PC-3 (cell line): ENCODE measurements at regions of chr14 and their contacts with region 1.

Region 1: GRCh38 chr14:64914237-64914971 is at the start of gene CHURC1:
- DNase-seq: peak; percentile 100
- ATAC-seq: peak; percentile 99
- H3K4me3 ChIP-seq: peak within 1 kb of the TSS; percentile 85
- H3K27ac ChIP-seq: peak within 1 kb of the TSS; percentile 48
- H3K4me1 ChIP-seq: peaks cover 15% of the 10 kb centered on the region
- H3K27me3 ChIP-seq: no peaks in the 10 kb centered on the region
- CTCF ChIP-seq: no peak
- total RNA-seq, gene CHURC1: 44.0 and 50.3 TPM in 2 replicates

Region 2: GRCh38 chr14:64806202-64806860 is 108.1 kb before region 1 on chr14:
- CTCF ChIA-PET with region 1: interaction called, 3 read pairs
- POLR2A ChIA-PET with region 1: no interaction called
- intact Hi-C with region 1: loop called (anchors 5 kb)
- DNase-seq: peak; percentile 99
- ATAC-seq: peak; percentile 86
- H3K4me3 ChIP-seq: peak overlapping the region; percentile 52
- H3K27ac ChIP-seq: peak overlapping the region; percentile 93
- H3K4me1 ChIP-seq: peaks cover 36% of the 10 kb centered on the region
- H3K27me3 ChIP-seq: no peaks in the 10 kb centered on the region
- CTCF ChIP-seq: no peak

Region 3: DNA sequence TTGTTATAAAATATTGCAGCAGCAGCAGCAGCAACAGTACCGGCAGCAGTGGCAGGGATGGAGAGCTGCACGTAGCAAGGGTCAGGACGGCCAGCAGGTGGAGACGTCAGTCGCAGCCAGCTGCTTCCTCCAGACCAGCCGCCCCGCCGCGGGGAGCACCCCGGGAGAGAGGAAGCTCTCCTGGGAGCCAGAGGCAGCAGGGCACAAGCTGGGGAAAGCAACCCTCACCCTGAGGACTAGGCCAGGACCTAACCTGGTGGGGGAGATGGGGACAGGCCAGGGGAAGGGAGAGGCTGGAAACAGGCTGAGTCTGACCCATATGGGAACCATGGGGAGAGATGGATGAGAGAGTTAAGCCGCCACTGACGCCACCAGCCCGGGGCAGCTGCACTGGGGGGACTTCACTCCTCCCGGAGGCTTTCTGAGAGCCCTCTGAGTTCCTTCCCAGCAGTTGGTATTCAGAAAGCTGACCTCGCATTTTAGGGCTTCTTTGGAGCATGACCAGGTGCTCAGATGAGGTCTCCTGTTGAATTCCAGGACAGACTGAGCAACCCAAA is 91.0 kb before region 1 on chr14:
- CTCF ChIA-PET with region 1: interaction called, 18 read pairs
- POLR2A ChIA-PET with region 1: no interaction called
- intact Hi-C with region 1: no loop called
- DNase-seq: peak; percentile 83
- ATAC-seq: peak; percentile 99
- H3K4me3 ChIP-seq: peak overlapping the region; percentile 47
- H3K27ac ChIP-seq: no peak overlapping the region
- H3K4me1 ChIP-seq: no peaks in the 10 kb centered on the region; the same call in 1 of the 2 replicates
- H3K27me3 ChIP-seq: no peaks in the 10 kb centered on the region
- CTCF ChIP-seq: peak; percentile 90

Region 4: DNA sequence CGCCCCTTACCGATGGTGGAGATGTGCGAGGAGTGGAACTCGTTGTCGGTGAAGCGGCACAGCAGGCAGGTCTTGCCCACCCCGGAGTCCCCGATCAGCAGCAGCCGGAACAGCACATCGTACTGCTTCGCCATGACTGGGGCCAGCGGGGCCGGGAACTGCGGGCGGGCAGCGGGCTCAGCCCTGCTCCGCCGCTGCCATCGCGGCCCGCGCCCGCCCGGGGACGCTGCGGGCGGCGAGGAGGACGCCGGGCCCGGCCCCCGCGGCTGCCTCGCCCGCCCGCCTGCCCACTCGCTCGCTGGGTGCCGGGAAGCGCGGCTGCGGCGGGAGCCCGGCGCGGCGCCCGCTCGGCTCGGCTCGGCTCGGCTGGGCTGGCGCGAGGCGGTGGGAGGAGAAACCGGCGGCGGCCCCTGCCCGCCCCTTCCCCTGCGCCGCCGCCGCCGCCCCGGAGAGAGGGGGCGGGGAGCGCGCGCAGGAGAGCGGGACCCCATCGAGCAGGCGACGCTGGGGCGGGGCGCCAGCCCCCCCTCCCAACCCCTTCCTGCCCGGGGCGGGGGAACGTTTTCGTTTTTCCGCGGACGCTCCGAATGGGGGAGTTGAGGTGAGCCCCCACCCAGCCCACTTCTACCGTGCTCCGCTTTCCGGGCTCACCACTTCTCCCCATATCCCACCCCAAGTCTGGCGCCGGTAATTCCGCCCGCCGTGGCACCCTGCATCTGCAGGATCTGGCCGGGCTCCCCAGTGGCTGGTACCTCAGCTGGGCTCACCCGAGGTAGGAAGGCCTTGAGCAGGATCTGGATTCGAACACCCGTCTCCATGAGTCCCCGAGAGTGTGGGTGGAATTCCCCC is 57.8 kb after region 1 on chr14 and contains the start of gene RAB15:
- CTCF ChIA-PET with region 1: interaction called, 14 read pairs
- POLR2A ChIA-PET with region 1: no interaction called
- intact Hi-C with region 1: no loop called
- DNase-seq: peak; percentile 35
- ATAC-seq: peak; percentile 75
- H3K4me3 ChIP-seq: peak within 1 kb of the TSS; percentile 77
- H3K27ac ChIP-seq: no peak within 1 kb of the TSS
- H3K4me1 ChIP-seq: peaks cover 22% of the 10 kb centered on the region
- H3K27me3 ChIP-seq: no peaks in the 10 kb centered on the region
- CTCF ChIP-seq: no peak
- total RNA-seq, gene RAB15: 20.6 and 27.0 TPM in 2 replicates

Region 5: DNA sequence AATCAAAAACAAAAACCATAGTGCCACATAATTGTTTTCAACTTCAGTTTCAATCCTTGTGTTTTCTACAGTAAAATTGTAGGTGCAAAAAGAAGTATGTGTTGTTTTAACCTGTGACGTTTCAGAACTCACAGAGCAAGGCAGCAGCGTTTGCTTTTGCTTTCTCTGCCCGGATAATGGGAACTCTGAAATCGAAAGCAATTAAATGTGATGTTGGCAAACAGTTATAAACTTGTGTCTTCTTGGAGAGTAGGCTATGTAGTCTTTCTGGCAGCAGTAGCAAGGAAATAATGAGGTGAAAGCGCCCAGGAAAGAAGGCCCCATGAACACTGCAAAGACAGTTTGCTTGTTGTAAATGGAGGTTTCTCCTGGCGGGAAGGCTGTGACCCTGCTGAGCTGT is 111.4 kb after region 1 on chr14:
- CTCF ChIA-PET with region 1: no interaction called
- POLR2A ChIA-PET with region 1: no interaction called
- intact Hi-C with region 1: no loop called
- DNase-seq: no peak
- ATAC-seq: no peak
- H3K4me3 ChIP-seq: no peak overlapping the region
- H3K27ac ChIP-seq: no peak overlapping the region
- H3K4me1 ChIP-seq: peaks cover 5% of the 10 kb centered on the region; the same call in 1 of the 2 replicates
- H3K27me3 ChIP-seq: no peaks in the 10 kb centered on the region
- CTCF ChIP-seq: no peak

Region 6: DNA sequence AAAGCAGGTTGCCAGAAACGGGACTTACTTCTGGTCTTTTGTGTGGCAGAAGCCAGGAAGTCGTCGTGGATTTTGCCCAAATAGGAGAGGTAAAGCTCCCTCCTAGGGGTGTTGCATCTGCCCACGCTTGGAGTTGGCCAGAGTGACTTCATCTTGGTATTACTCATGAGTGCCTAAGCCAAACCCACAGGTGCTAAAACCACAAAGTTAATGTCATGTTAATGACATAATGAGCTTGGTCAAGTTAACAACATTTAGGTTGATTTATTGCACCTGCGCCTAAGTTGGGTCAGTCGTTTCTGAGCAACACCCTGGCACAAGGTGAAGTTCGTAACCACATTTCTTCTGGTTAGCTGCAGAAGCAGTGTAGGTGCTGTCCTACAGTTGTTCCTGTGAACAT is 723.4 kb after region 1 on chr14:
- CTCF ChIA-PET with region 1: no interaction called
- POLR2A ChIA-PET with region 1: no interaction called
- intact Hi-C with region 1: no loop called
- DNase-seq: no peak
- ATAC-seq: peak; percentile 49
- H3K4me3 ChIP-seq: no peak overlapping the region
- H3K27ac ChIP-seq: no peak overlapping the region
- H3K4me1 ChIP-seq: peaks cover 9% of the 10 kb centered on the region
- H3K27me3 ChIP-seq: no peaks in the 10 kb centered on the region
- CTCF ChIP-seq: no peak